Ascending aorta (tissue), 2 donors: ENCODE measurements at regions of chr6 and their contacts with region 1.

Region 1: DNA sequence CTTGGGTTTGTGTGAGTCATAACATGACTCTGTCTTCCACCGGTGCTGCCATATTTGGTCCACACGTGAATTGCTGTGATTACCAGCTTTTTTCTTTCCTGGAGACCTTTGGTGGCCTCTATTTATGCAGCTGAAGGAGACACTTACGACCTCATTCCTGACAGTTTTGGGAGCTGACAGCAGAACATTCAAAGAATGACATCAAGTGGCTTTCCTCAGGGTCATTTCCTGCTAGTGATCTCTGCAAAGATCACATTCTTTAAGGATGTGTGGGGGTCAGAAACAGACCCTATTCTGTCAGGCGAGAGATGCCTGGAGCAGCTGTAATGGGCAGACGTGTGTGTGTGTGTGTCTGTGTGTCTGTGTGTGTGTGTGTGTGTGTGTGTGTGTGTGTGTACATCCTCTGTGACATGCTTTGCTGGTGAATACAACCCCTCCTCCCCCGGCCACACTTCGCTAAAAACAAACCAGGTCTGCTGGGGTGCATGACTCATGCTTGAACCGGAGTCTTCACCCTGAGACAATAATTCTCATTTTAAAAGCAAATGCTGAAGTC is 115.6 kb downstream of the TMEM170B start:
- DNase-seq: no peak
- H3K4me3 ChIP-seq: no peak overlapping the region
- H3K27ac ChIP-seq: no peak overlapping the region
- H3K4me1 ChIP-seq: peaks cover 0 to 28% of the 10 kb centered on the region in 2 donors
- H3K27me3 ChIP-seq: no peaks in the 10 kb centered on the region
- CTCF ChIP-seq: no peak

Region 2: GRCh38 chr6:11585426-11586016 is 67.6 kb before region 1 on chr6:
- intact Hi-C with region 1: loop called (anchors 1 kb)
- DNase-seq: no peak
- H3K4me3 ChIP-seq: no peak overlapping the region
- H3K27ac ChIP-seq: no peak overlapping the region
- H3K4me1 ChIP-seq: peaks cover 0 to 21% of the 10 kb centered on the region in 2 donors
- H3K27me3 ChIP-seq: no peaks in the 10 kb centered on the region
- CTCF ChIP-seq: peak; percentile 52 to 68 (median 58)

Region 3: GRCh38 chr6:11618533-11618932 is 34.6 kb before region 1 on chr6:
- intact Hi-C with region 1: loop called (anchors 5 kb)
- DNase-seq: no peak
- H3K4me3 ChIP-seq: no peak overlapping the region
- H3K27ac ChIP-seq: no peak overlapping the region
- H3K4me1 ChIP-seq: peaks cover 0 to 31% of the 10 kb centered on the region in 2 donors
- H3K27me3 ChIP-seq: no peaks in the 10 kb centered on the region
- CTCF ChIP-seq: no peak

Region 4: DNA sequence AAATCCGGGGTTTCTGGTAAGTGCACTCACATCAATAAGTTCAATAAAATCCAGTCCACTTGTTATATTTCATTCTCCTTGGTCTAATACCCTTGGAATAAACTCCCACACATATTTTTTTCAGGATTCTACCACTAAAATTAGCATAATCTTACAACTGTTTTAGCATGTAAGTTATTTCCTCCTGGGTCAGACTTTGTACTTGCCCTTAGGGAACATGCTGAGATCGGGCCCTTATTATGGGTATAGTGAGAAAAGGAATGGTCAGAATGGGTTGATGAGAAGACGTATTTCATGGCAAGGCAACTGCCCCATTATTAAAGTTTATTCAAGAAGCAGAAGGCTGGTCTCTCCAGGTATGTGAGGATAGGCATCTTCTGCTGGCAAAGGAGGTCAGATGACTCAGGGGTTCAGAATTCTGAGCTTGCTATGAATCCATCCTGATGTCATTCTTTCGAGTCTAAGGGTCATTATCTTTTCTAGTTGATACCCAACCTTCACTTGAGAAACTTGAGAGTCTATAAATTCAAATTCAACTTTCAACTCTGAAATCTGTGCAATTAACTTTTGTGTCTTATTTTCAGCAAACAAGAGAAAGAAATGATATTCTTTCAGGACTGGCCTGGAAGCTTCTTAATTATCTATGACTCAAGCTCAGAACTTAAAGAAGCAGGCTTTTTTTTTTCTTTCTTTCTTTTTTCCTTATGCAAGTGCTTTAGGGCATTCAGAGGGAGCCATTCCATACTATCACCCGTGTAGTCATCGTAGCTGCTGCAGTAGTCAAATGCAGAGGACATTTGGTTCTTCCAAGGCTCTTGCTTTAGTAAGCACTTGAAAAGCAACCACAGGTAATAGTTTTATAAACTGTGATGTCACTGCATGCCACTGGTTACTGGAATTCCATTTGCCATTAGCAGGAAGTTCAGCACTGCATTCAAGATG is 32.3 kb after region 1 on chr6:
- intact Hi-C with region 1: no loop called
- DNase-seq: no peak
- H3K4me3 ChIP-seq: no peak overlapping the region
- H3K27ac ChIP-seq: no peak overlapping the region
- H3K4me1 ChIP-seq: no peaks in the 10 kb centered on the region
- H3K27me3 ChIP-seq: no peaks in the 10 kb centered on the region
- CTCF ChIP-seq: no peak